SK-N-SH (cell line): ENCODE measurements at regions of chr7 and their contacts with region 1.

Region 1: DNA sequence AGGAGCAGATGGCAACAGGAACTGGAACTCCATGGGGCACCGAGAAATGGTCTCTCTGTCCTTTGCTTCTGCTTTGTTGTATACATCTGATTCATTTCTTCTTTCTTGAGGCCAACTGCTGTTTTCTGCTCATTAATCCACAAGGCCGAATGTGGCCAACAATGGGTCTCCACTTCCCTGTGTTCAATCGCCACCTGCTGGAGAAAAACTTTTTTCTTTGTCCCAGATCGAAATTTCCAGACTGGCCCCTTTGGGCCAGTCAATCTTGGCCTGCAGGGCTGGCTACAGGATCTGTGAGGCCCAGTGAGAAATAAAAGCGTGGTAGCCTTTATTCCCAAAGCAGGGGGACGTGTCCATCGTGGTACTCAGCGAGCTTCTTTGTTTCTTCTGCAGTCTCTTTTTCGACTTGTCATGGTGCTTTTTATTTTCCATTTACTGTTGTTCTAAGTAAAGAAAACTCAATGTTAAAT is 58.8 kb downstream of the PARP12 start:
- DNase-seq: peak; percentile 67
- H3K4me3 ChIP-seq: no peak overlapping the region
- H3K27ac ChIP-seq: no peak overlapping the region
- H3K4me1 ChIP-seq: peaks cover 0 to 5% of the 10 kb centered on the region in 2 experiments; a peak in 1 of 4 replicates
- H3K27me3 ChIP-seq: no peaks in the 10 kb centered on the region
- CTCF ChIP-seq: peak; percentile 73
- EP300 ChIP-seq: no peak
- RAD21 ChIP-seq: peak; percentile 71

Region 2: DNA sequence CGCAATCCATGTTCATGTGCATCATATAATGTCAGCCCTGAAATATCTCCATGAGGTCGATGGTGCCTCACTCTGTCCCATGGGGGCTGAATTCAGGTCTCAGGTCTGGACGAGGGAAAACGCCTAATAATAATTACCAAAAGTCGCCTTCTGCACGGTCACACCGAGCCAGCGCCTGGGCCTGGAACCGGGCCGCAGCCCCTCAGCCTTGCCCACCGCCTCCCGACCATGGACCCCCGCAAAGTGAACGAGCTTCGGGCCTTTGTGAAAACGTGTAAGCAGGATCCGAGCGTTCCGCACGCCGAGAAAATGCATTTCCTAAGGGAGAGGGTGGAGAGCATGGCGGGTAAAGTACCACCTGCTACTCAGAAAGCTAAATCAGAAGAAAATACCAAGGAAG is 501.7 kb before region 1 on chr7:
- CTCF ChIA-PET with region 1: interaction called, 88 read pairs
- POLR2A ChIA-PET with region 1: interaction called, 3 read pairs
- DNase-seq: no peak
- H3K4me3 ChIP-seq: no peak overlapping the region
- H3K27ac ChIP-seq: no peak overlapping the region
- H3K4me1 ChIP-seq: no peaks in the 10 kb centered on the region
- H3K27me3 ChIP-seq: no peaks in the 10 kb centered on the region
- CTCF ChIP-seq: no peak
- EP300 ChIP-seq: no peak
- RAD21 ChIP-seq: no peak

Region 3: DNA sequence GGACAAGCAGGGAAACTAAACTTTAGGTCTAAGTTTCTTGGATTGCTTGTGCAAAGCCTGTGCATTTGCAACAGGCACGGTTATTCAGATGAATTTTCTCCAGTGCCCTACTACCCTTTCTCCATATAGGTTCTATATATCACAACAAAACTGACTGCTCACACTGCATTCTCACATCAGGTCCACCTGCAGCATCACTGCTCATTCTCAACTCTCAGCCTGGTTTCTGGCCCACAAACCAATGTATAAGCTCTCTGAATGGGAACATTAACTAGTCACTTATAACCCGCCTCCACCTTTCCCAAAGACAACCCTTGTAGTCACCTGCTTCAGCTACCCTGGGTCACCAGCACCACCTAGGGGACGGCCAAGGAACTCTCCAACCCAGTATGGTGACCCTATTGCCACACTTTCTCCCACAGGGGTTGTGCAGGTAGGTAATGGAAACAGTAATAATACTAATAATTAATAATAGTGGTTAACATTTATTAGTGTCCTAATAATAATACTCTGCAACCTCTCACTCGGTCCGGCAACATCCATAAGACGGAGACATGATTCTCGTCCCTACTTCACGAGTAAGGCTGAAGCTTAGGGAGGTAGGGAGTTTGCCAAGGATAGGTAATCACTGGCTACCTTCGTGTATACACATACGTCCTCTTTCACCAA is 383.1 kb before region 1 on chr7:
- CTCF ChIA-PET with region 1: interaction called, 46 read pairs
- POLR2A ChIA-PET with region 1: no interaction called
- DNase-seq: peak; percentile 67
- H3K4me3 ChIP-seq: no peak overlapping the region
- H3K27ac ChIP-seq: no peak overlapping the region
- H3K4me1 ChIP-seq: no peaks in the 10 kb centered on the region
- H3K27me3 ChIP-seq: no peaks in the 10 kb centered on the region
- CTCF ChIP-seq: peak; percentile 76
- EP300 ChIP-seq: no peak
- RAD21 ChIP-seq: peak; percentile 79

Region 4: DNA sequence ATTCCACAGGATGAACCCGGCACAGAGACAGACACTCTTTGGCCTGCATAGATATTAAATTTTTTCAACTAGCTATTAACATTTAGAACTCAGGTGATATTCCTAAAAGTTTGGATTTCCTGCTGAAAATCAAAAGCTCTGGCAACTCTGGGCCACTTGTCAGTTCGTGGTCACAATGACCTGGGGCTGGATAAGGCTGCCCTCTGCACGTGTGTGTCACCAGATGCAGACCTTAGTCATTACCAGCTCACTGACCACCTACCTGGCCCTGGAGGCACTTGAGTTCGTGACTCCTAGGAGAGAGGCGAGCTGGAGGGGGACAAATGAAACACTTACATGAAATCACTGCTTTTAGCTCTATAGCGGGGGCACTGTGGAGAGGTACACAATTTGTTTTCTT is 352.6 kb before region 1 on chr7:
- CTCF ChIA-PET with region 1: interaction called, 229 read pairs
- POLR2A ChIA-PET with region 1: no interaction called
- DNase-seq: peak; percentile 54
- H3K4me3 ChIP-seq: no peak overlapping the region
- H3K27ac ChIP-seq: no peak overlapping the region
- H3K4me1 ChIP-seq: peaks cover 0 to 14% of the 10 kb centered on the region in 2 experiments; a peak in 1 of 4 replicates
- H3K27me3 ChIP-seq: no peaks in the 10 kb centered on the region
- CTCF ChIP-seq: no peak
- EP300 ChIP-seq: no peak
- RAD21 ChIP-seq: no peak

Region 5: DNA sequence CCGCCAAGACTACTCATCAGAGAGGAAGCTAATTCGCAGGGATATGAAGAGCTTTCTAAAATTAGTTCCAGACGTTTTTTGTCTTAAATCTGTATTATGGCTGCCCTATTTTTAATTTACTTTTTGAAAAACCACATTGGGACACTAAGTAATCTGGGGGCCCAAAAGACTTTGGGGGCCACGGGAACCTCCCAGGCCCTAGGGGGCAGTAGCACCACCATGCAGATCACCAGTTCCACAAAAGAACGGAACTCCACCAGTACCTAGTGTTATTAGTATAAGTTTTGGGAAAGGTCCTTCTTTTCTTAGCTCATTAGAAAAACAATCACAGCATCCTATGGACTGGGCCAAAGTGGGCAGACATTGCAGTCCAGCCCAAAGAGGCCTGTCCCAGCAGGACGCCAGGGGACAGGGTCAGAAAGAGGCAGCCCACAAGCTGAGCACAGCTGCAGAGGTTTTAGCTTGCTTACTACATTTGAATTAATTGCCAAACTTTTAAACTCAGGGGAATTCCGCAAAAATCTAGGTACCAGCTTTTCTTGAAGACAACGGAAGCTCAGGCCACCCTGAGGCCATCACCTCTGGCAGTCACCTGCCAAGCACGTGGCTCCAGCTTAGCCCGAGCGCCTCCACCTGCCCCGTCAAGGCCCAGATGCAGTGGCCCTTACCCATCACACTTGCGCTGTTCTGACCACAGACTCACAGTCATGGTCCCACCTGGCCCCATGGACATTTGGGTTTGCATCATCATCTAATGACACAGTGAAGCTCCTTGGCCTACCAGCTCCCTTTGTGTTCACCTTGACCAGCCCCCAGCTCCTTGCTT is 16.0 kb before region 1 on chr7:
- CTCF ChIA-PET with region 1: interaction called, 55 read pairs
- POLR2A ChIA-PET with region 1: no interaction called
- DNase-seq: no peak
- H3K4me3 ChIP-seq: no peak overlapping the region
- H3K27ac ChIP-seq: no peak overlapping the region
- H3K4me1 ChIP-seq: peaks cover 0 to 9% of the 10 kb centered on the region in 2 experiments; a peak in 1 of 4 replicates
- H3K27me3 ChIP-seq: no peaks in the 10 kb centered on the region; the same call in 1 of the 2 replicates
- CTCF ChIP-seq: peak; percentile 29; the same call in 1 of the 2 replicates
- EP300 ChIP-seq: no peak
- RAD21 ChIP-seq: no peak

Region 6: GRCh38 chr7:140022582-140023211 is 18.7 kb after region 1 on chr7:
- CTCF ChIA-PET with region 1: interaction called, 24 read pairs
- POLR2A ChIA-PET with region 1: no interaction called
- DNase-seq: no peak
- H3K4me3 ChIP-seq: no peak overlapping the region
- H3K27ac ChIP-seq: no peak overlapping the region
- H3K4me1 ChIP-seq: peaks cover 0 to 15% of the 10 kb centered on the region in 2 experiments; a peak in 1 of 4 replicates
- H3K27me3 ChIP-seq: no peaks in the 10 kb centered on the region
- CTCF ChIP-seq: no peak
- EP300 ChIP-seq: no peak
- RAD21 ChIP-seq: no peak

Region 7: DNA sequence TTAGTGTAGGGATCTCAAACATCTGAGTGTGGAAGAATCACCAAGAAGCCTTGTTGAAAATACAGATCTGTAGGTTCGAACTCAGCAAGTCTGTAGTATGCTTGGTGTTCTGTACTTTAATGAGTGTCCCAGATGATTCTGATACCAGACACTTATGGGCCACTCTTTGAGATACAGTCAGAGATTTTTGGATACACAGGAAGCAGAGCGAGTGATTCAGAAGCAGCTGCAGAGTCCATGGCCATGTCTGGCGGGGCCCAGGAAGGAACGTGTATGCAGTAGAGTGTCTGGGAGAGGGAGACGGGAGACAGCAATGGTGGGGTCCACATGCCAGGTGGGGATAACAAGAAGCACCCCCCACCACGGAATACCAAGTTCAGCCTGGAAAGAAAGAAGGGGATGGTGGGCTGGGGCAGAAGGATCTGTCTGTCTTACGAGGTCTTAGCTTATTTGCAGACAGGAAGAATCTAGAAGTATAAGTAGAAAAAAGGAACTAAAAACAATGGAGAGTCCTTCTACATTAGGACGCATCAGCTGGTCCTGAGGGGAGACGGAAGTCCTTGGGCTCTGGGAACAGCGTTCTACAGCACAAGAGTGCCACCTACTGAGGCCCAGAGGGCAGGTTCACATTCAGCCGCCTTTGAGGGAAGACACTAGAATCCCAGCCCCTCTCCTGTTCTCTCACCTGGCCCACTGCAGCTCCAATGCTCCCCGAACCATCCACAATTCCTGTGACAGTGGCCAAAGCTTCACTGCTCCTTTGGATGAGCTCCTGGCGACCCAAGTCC is 339.0 kb after region 1 on chr7:
- CTCF ChIA-PET with region 1: interaction called, 10 read pairs
- POLR2A ChIA-PET with region 1: no interaction called
- DNase-seq: peak; percentile 58
- H3K4me3 ChIP-seq: no peak overlapping the region
- H3K27ac ChIP-seq: peak overlapping the region in 1 of 2 experiments; percentile 16; a peak in 1 of 4 replicates
- H3K4me1 ChIP-seq: peaks cover 8 to 15% of the 10 kb centered on the region in 2 experiments; a peak in 3 of 4 replicates
- H3K27me3 ChIP-seq: no peaks in the 10 kb centered on the region
- CTCF ChIP-seq: peak; percentile 61
- EP300 ChIP-seq: no peak
- RAD21 ChIP-seq: peak; percentile 78